CD4-positive, alpha-beta T cell (primary cell): ENCODE measurements at regions of chr9 and their contacts with region 1.

Region 1: GRCh38 chr9:73162987-73163768 is 11.5 kb downstream of the ANXA1 start:
- DNase-seq: peak in 2 of 14 experiments; percentile 30 to 33
- ATAC-seq: peak; percentile 37
- H3K4me3 ChIP-seq: no peak overlapping the region
- H3K4me3 Mint-ChIP-seq: no peak overlapping the region
- H3K27ac ChIP-seq: no peak overlapping the region
- H3K27ac Mint-ChIP-seq: peak overlapping the region; percentile 74
- H3K4me1 ChIP-seq: peaks cover 7% of the 10 kb centered on the region
- H3K4me1 Mint-ChIP-seq: peaks cover 32% of the 10 kb centered on the region
- H3K27me3 ChIP-seq: no peaks in the 10 kb centered on the region
- H3K27me3 Mint-ChIP-seq: no peaks in the 10 kb centered on the region
- CTCF ChIP-seq: no peak

Region 2: GRCh38 chr9:72356041-72356582 is 807.1 kb before region 1 on chr9:
- CTCF ChIA-PET with region 1: no interaction called
- POLR2A ChIA-PET with region 1: no interaction called
- intact Hi-C with region 1: loop called in 1 of 2 experiments (anchors 10 kb)
- DNase-seq: peak in 1 of 14 experiments; percentile 11
- ATAC-seq: no peak
- H3K4me3 ChIP-seq: no peak overlapping the region
- H3K4me3 Mint-ChIP-seq: no peak overlapping the region
- H3K27ac ChIP-seq: no peak overlapping the region
- H3K27ac Mint-ChIP-seq: peak overlapping the region; percentile 63
- H3K4me1 ChIP-seq: peaks cover 8% of the 10 kb centered on the region
- H3K4me1 Mint-ChIP-seq: peaks cover 66% of the 10 kb centered on the region
- H3K27me3 ChIP-seq: no peaks in the 10 kb centered on the region
- H3K27me3 Mint-ChIP-seq: no peaks in the 10 kb centered on the region
- CTCF ChIP-seq: no peak